ENCODE measurements at regions of chr21 and their contacts with region 1.

Region 1: GRCh38 chr21:36028127-36029069 is 31.9 kb downstream of the SETD4 start:
- DNase-seq: peak; percentile 63 to 85
- ATAC-seq: peak; percentile 84 to 96 (median 90)
- H3K4me3 ChIP-seq: no peak overlapping the region
- H3K4me3 Mint-ChIP-seq: peak overlapping the region; percentile 2
- H3K27ac ChIP-seq: no peak overlapping the region
- H3K27ac Mint-ChIP-seq: no peak overlapping the region
- H3K4me1 ChIP-seq: peaks cover 4% of the 10 kb centered on the region
- H3K4me1 Mint-ChIP-seq: peaks cover 7% of the 10 kb centered on the region in 2 donors
- H3K27me3 ChIP-seq: no peaks in the 10 kb centered on the region
- H3K27me3 Mint-ChIP-seq: no peaks in the 10 kb centered on the region
- CTCF ChIP-seq: peak; percentile 89

Region 2: DNA sequence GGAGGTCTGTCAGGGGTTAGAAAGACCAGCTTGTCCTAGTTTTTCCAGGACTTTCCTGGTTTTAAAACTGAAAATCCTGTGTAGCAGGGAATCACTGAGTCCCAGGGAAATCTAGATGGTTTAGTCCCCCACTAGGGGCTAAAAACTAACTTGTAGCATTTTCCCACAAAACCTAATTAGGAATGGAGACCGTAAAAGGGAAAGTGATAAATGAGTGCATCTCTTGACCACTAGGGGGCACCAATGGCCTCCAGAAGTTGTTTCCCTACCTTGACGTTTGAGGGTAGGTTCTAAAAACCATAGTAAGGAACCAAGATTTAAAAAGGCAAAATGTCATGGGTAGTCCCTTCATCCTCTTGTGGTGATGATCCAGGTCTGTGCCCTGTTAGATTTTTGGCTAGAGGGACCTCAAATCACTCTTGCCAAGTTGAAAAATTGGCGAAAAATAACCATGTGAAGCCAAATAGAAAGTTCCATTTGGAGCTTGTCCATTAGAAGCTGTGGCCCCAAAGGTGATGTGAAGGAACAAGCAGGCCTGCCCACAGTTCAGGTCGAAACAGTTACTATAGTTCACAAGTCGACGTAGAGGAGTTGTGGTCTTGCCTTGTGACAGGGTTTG is 1335.1 kb before region 1 on chr21:
- intact Hi-C with region 1: loop called (anchors 1 kb)
- DNase-seq: peak in 1 of 2 donors; percentile 81
- ATAC-seq: peak in 2 of 3 donors; percentile 36 to 57
- H3K4me3 ChIP-seq: no peak overlapping the region
- H3K4me3 Mint-ChIP-seq: no peak overlapping the region
- H3K27ac ChIP-seq: no peak overlapping the region
- H3K27ac Mint-ChIP-seq: no peak overlapping the region
- H3K4me1 ChIP-seq: no peaks in the 10 kb centered on the region
- H3K4me1 Mint-ChIP-seq: peaks cover 0 to 4% of the 10 kb centered on the region in 2 donors
- H3K27me3 ChIP-seq: no peaks in the 10 kb centered on the region
- H3K27me3 Mint-ChIP-seq: peaks cover 19 to 26% of the 10 kb centered on the region in 2 donors
- CTCF ChIP-seq: peak; percentile 91